ENCODE measurements at regions of chr1 and their contacts with region 1.

Region 1: GRCh38 chr1:117895482-117896114 is 33.8 kb downstream of the GDAP2 start:
- DNase-seq: peak; percentile 85
- H3K4me3 ChIP-seq: no peak overlapping the region
- H3K27ac ChIP-seq: no peak overlapping the region
- H3K27me3 ChIP-seq: no peaks in the 10 kb centered on the region
- CTCF ChIP-seq: peak; percentile 79

Region 2: DNA sequence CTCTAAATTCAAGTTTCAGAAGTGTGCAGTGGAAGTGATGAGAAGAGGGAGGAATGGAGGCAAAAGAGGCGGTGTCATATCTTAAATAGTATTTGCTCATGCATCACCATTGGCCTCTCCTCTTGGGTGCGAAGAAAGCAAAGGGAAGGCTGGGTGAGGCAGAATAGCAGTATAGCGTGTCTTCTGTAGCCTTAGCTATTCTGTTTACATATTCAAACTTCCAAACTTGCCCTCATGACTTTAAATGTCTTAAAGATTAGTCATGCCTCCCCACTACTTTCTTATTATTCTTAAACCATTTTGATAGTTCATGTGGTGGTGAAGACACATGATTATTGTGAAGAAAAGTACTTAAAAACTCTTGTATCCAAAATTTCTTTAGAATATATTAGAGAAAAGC is 394.3 kb before region 1 on chr1:
- CTCF ChIA-PET with region 1: interaction called, 13 read pairs
- POLR2A ChIA-PET with region 1: no interaction called
- DNase-seq: peak; percentile 43
- H3K4me3 ChIP-seq: no peak overlapping the region
- H3K27ac ChIP-seq: peak overlapping the region; percentile 32
- H3K27me3 ChIP-seq: no peaks in the 10 kb centered on the region
- CTCF ChIP-seq: no peak

Region 3: DNA sequence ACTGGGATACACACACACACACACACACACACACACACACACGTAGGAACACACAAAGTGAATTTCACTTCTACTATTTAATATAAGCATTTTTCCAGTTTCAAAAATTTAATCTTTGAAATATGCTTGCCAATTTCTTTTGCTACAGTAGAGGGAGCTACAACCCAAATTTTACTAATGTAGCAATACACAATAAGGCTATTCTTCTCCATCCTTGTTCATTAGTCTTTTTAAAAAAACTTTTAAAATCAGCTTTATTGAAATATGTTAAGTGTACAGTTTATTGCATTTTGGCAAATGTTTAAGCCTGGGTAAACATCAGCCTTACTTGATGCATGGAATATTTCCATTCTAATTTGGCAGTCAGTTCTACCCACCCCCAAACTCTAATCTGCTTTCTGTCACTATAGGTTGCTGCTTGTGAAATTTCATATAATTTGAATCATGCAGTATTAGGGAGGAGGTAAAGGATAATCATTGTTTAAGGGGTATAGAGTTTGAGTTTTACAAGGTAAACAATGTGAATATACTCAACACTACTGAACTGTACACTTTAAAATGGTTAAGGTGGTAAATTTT is 382.8 kb before region 1 on chr1:
- CTCF ChIA-PET with region 1: interaction called, 134 read pairs
- POLR2A ChIA-PET with region 1: interaction called, 4 read pairs
- DNase-seq: no peak
- H3K4me3 ChIP-seq: no peak overlapping the region
- H3K27ac ChIP-seq: no peak overlapping the region
- H3K27me3 ChIP-seq: no peaks in the 10 kb centered on the region
- CTCF ChIP-seq: peak; percentile 64

Region 4: DNA sequence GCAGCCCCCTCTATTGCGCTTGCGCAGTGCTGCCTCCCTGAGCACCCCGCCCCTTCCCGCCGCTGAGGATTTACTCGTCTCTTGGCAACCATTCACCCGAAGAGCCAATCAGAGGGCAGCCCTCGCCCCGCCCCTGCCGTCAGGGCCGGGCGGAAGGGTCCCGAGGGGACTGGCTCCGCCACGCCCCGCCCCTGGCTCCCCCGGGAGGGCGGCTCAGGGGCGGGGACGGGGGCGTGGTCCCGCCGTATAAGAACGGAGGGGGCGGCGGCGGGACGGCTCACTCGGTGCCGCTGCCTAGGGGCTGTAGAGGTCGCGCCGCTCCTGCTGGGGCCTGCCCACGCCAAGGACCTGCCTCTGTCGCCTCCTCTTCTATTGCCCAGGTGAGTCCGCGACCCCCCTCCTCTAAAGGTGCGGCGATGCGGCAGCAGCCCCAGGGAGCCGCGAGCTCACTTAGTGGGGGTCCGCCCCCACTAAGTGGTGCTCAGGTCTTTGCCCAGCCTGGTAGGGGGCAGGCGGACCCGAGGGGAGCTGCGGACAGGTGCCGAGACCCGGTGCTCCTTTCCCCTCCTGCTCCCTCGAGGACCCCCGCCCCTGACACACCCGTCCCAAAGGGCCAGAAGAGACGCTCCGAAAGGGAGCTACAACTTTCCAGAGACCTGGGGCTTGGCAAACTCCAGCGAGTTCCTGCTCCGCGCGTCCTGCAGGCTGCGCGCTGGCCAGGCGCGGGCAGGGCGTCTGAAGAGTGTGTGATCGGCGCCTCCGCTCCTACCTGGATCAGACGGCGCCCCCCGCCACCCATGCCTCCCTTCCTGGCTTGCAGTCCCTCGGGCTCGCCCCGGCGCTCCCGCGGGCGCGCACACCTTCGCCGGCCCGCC is 289.6 kb before region 1 on chr1 and contains the start of gene TENT5C:
- CTCF ChIA-PET with region 1: interaction called, 19 read pairs
- POLR2A ChIA-PET with region 1: interaction called, 5 read pairs
- DNase-seq: peak; percentile 95
- H3K4me3 ChIP-seq: peak within 1 kb of the TSS; percentile 91
- H3K27ac ChIP-seq: peak within 1 kb of the TSS; percentile 11
- H3K27me3 ChIP-seq: peaks cover 12% of the 10 kb centered on the region
- CTCF ChIP-seq: peak; percentile 19; the same call in 1 of the 2 replicates
- polyA plus RNA-seq, gene TENT5C: 29.2 and 30.6 TPM in 2 replicates

Region 5: GRCh38 chr1:117702654-117703053 is 192.9 kb before region 1 on chr1:
- CTCF ChIA-PET with region 1: interaction called, 16 read pairs
- POLR2A ChIA-PET with region 1: no interaction called
- DNase-seq: no peak
- H3K4me3 ChIP-seq: no peak overlapping the region
- H3K27ac ChIP-seq: no peak overlapping the region
- H3K27me3 ChIP-seq: no peaks in the 10 kb centered on the region
- CTCF ChIP-seq: no peak

Region 6: DNA sequence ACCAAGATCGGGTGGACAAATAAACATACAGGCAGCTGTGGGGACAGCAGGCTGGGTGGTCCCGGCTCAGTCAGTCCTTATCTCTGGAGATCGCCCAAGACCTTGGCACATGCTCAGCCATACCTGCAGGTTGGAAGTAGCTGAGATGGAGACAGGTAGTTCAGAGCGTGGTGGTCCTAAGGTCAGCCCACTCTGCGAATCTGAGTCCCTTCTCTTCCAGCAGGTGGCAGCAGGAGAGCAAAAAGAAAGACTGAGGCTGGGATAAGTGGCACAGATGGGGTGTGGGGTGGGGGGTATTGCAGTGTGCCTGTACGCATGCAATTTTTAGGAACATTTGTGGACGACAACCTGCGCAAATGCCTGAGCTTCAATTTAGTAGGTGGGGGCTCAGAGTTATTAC is 184.9 kb before region 1 on chr1:
- CTCF ChIA-PET with region 1: interaction called, 17 read pairs
- POLR2A ChIA-PET with region 1: no interaction called
- DNase-seq: no peak
- H3K4me3 ChIP-seq: no peak overlapping the region
- H3K27ac ChIP-seq: no peak overlapping the region
- H3K27me3 ChIP-seq: no peaks in the 10 kb centered on the region
- CTCF ChIP-seq: peak; percentile 42

Region 7: GRCh38 chr1:117929173-117929989 is 33.8 kb after region 1 on chr1 and contains the starts of genes GDAP2 and WDR3:
- CTCF ChIA-PET with region 1: interaction called, 14 read pairs
- POLR2A ChIA-PET with region 1: no interaction called
- DNase-seq: peak; percentile 87
- H3K4me3 ChIP-seq: peak within 1 kb of the TSS; percentile 97
- H3K27ac ChIP-seq: peak within 1 kb of the TSS; percentile 73
- H3K27me3 ChIP-seq: no peaks in the 10 kb centered on the region
- CTCF ChIP-seq: no peak
- polyA plus RNA-seq, gene GDAP2: 18.9 and 25.4 TPM in 2 replicates
- polyA plus RNA-seq, gene WDR3: 33.4 and 41.4 TPM in 2 replicates